AG04450 (cell line): ENCODE measurements at regions of chr3 and their contacts with region 1.

Region 1: DNA sequence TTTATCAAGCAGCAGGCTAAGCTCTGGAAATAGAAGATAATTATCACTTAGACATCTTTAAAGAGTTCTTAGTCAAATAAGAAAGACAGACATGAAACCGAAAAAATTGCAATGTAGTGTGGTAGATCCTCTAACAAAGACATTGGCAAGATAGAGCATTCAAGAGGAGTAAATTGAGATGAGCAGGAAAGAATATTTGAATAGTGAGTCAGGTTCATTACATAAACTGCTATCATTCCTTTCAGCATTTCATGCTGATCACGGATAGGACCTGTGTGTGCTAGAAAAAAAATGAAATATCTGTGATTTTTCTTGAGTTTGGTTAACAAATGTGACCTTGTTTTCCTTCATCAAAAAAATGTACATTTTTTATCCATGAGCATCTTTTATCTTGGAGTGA is 460.9 kb downstream of the OTOL1 start:
- DNase-seq: no peak
- H3K4me3 ChIP-seq: no peak overlapping the region
- H3K27ac ChIP-seq: no peak overlapping the region
- H3K27me3 ChIP-seq: no peaks in the 10 kb centered on the region
- CTCF ChIP-seq: no peak

Region 2: DNA sequence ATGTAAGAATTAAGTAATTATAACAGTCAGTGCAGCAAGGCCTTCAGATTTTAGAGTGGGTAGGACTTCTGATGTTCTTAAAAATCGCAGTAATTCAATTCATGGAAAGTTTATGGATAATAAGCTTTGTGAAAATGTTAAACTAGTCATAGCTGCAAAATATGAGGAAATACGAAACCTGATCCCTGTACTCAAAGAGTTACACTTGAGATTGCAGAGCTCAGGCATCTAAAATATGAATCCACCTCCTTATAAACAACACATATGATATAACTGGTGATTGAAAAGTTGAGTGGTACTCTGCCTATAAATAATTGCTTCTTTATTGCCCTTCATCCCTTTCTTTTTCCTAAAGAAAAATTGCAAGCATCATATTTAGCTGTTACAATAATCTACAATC is 12.4 kb after region 1 on chr3:
- CTCF ChIA-PET with region 1: no interaction called
- POLR2A ChIA-PET with region 1: interaction called, 13 read pairs
- DNase-seq: no peak
- H3K4me3 ChIP-seq: no peak overlapping the region
- H3K27ac ChIP-seq: no peak overlapping the region
- H3K27me3 ChIP-seq: no peaks in the 10 kb centered on the region
- CTCF ChIP-seq: no peak

Region 3: DNA sequence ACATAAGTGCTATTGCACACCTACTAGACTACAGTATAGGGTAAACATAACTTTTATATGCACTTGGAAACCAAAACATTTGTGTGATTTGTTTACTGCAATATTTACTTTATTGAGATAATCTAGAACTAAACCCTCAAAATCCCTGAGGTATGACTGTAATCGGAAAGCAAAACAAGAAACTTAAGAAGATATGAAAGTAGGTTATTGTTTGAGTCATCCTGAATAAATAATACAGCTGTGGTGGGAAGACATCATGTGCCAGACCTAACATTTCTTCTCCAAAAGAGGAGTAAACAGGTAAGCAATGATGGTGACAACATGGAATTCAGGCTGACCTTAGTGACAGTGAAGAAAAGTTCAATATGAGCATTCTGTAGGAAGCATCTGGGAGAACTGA is 304.7 kb after region 1 on chr3:
- CTCF ChIA-PET with region 1: no interaction called
- POLR2A ChIA-PET with region 1: no interaction called
- DNase-seq: no peak
- H3K4me3 ChIP-seq: no peak overlapping the region
- H3K27ac ChIP-seq: no peak overlapping the region
- H3K27me3 ChIP-seq: no peaks in the 10 kb centered on the region
- CTCF ChIP-seq: no peak